ENCODE measurements at regions of chr15 and their contacts with region 1.

Region 1: GRCh38 chr15:48637260-48638038 is 8.1 kb downstream of the FBN1 start:
- DNase-seq: no peak
- ATAC-seq: no peak
- H3K4me3 ChIP-seq: no peak overlapping the region
- H3K27ac ChIP-seq: no peak overlapping the region
- H3K4me1 ChIP-seq: peaks cover 24% of the 10 kb centered on the region
- H3K27me3 ChIP-seq: no peaks in the 10 kb centered on the region
- CTCF ChIP-seq: no peak
- POLR2A ChIP-seq: no peak; the same call in 1 of the 2 replicates
- RAD21 ChIP-seq: no peak

Region 2: DNA sequence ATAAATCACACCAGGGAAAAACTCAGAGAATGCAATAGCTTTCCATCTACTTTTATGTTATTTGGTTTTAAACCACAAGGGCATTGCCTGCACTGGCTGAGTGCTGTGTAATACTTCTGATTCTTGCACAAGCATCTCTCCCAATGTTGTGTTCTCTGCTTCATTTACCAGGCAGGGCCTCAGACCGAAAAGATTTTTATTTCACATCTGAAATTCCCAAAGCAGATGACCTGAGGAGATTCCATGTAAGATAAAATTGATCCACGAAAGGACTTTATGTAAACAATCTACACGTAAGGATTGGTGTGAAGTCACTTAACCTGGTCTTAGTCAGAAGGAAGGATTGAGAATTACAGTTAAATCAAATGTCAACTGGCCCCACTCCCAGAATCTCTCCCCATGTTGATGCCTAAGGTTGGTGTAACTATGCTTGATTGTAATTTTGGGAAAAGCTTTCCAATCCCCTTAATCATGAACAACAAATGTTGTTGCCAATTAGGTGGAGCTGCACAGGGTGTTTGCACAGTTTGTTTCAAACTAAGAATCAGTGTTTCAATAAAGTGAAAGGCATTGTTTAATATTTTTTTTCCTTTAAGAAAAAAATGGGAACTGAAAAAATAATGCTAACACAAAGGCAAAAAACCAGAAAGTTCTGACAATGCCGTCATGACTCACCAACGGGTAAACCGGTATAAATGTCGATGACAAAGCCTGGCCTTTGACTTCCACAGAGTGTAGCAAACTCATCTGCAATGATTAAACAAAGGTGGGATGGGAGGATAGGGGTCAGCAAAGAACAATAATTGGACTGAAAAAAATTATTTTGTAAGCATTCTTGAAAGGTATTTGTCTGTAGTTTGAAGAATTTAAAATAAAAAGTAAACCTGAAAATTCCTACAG is 177.6 kb before region 1 on chr15:
- CTCF ChIA-PET with region 1: no interaction called
- POLR2A ChIA-PET with region 1: no interaction called
- dilution Hi-C with region 1: no loop called
- in situ Hi-C with region 1: no loop called
- intact Hi-C with region 1: no loop called
- DNase-seq: peak; percentile 79
- ATAC-seq: peak; percentile 56
- H3K4me3 ChIP-seq: no peak overlapping the region
- H3K27ac ChIP-seq: peak overlapping the region; percentile 67; the same call in 1 of the 2 replicates
- H3K4me1 ChIP-seq: peaks cover 12% of the 10 kb centered on the region
- H3K27me3 ChIP-seq: no peaks in the 10 kb centered on the region
- CTCF ChIP-seq: peak; percentile 9; the same call in 1 of the 2 replicates
- POLR2A ChIP-seq: no peak
- RAD21 ChIP-seq: no peak

Region 3: DNA sequence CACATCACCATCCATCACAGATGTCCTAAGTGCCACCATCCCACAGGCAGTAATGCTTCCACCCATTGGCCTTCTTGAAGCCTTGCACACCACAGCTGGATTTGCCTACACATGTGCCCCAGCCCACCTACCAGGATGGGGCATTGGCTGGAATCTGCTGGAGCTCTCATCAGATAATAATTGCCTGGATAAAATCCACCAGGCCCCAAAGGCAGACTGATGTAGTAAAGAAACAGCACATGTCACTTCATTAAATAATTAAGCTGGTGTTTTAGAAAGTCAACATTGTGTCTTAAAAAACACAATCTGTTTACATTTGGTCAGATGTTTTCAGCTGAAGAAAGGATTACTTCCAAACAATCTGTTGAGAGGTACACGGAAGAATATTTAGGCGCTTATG is 1252.1 kb after region 1 on chr15:
- CTCF ChIA-PET with region 1: no interaction called
- POLR2A ChIA-PET with region 1: interaction called, 11 read pairs
- dilution Hi-C with region 1: no loop called
- in situ Hi-C with region 1: no loop called
- intact Hi-C with region 1: no loop called
- DNase-seq: no peak
- ATAC-seq: no peak
- H3K4me3 ChIP-seq: no peak overlapping the region
- H3K27ac ChIP-seq: no peak overlapping the region
- H3K4me1 ChIP-seq: no peaks in the 10 kb centered on the region; the same call in 1 of the 2 replicates
- H3K27me3 ChIP-seq: no peaks in the 10 kb centered on the region
- CTCF ChIP-seq: no peak
- POLR2A ChIP-seq: no peak
- RAD21 ChIP-seq: no peak

Measured in IMR-90 (cell line).